Heart right ventricle (tissue), 16 donors: ENCODE measurements at regions of chr5 and their contacts with region 1.

Region 1: DNA sequence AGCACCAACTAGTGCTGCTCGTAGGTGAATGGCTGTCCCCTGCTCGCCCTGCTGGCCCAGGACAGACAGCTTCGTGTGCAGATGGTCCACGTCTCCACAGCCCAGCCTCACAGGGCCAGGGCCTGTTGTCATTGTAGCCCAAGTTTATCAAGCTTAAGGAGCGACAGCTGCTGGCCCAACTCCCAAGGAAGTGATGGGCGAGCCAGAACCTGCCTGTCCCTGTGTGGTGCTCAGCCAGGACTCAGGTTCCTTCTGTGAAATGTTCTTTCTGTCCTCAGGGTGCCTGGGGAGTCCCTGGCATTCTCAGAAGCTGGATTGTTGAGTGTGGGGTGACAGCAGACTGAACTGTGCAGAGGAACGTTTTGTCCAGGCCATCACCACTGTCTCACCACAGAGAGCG is 16.4 kb downstream of the TRIP13 start:
- DNase-seq: no peak
- ATAC-seq: no peak
- H3K4me3 ChIP-seq: no peak overlapping the region
- H3K27ac ChIP-seq: no peak overlapping the region
- H3K4me1 ChIP-seq: no peaks in the 10 kb centered on the region
- H3K27me3 ChIP-seq: no peaks in the 10 kb centered on the region
- CTCF ChIP-seq: no peak

Region 2: GRCh38 chr5:671459-672328 is 237.4 kb before region 1 on chr5:
- intact Hi-C with region 1: loop called in 6 of 10 experiments (anchors 2 to 5 kb)
- DNase-seq: peak; percentile 75 to 79
- ATAC-seq: peak; percentile 71 to 88 (median 80)
- H3K4me3 ChIP-seq: peak overlapping the region in 4 of 10 donors; percentile 8 to 40 (median 28)
- H3K27ac ChIP-seq: peak overlapping the region in 6 of 10 donors; percentile 29 to 76 (median 56)
- H3K4me1 ChIP-seq: peaks cover 25 to 45% (median 37%) of the 10 kb centered on the region in 9 donors
- H3K27me3 ChIP-seq: peaks cover 0 to 25% (median 0%) of the 10 kb centered on the region in 7 donors
- CTCF ChIP-seq: peak; percentile 88 to 98 (median 95)

Region 3: GRCh38 chr5:873328-873727 is 35.8 kb before region 1 on chr5:
- intact Hi-C with region 1: no loop called
- DNase-seq: no peak
- ATAC-seq: peak in 1 of 8 donors; percentile 7
- H3K4me3 ChIP-seq: no peak overlapping the region
- H3K27ac ChIP-seq: peak overlapping the region in 1 of 10 donors; percentile 8
- H3K4me1 ChIP-seq: peaks cover 0 to 18% (median 0%) of the 10 kb centered on the region in 9 donors
- H3K27me3 ChIP-seq: no peaks in the 10 kb centered on the region
- CTCF ChIP-seq: no peak

Region 4: GRCh38 chr5:1161833-1162229 is 252.7 kb after region 1 on chr5:
- intact Hi-C with region 1: no loop called
- DNase-seq: peak; percentile 73 to 83
- ATAC-seq: peak; percentile 78 to 92 (median 86)
- H3K4me3 ChIP-seq: no peak overlapping the region
- H3K27ac ChIP-seq: no peak overlapping the region
- H3K4me1 ChIP-seq: peaks cover 0 to 12% (median 3%) of the 10 kb centered on the region in 9 donors
- H3K27me3 ChIP-seq: peaks cover 0 to 9% (median 5%) of the 10 kb centered on the region in 7 donors
- CTCF ChIP-seq: no peak